ENCODE measurements at regions of chr7 and their contacts with region 1.

Region 1: GRCh38 chr7:104816537-104816936 is 197.5 kb upstream of the KMT2E start:
- DNase-seq: no peak
- H3K4me3 ChIP-seq: no peak overlapping the region
- H3K27ac ChIP-seq: no peak overlapping the region
- H3K4me1 ChIP-seq: no peaks in the 10 kb centered on the region
- H3K27me3 ChIP-seq: peaks cover 80% of the 10 kb centered on the region
- CTCF ChIP-seq: no peak

Region 2: GRCh38 chr7:103879411-103879810 is 937.1 kb before region 1 on chr7:
- CTCF ChIA-PET with region 1: interaction called, 12 read pairs
- POLR2A ChIA-PET with region 1: no interaction called
- intact Hi-C with region 1: no loop called
- DNase-seq: no peak
- H3K4me3 ChIP-seq: no peak overlapping the region
- H3K27ac ChIP-seq: no peak overlapping the region
- H3K4me1 ChIP-seq: no peaks in the 10 kb centered on the region
- H3K27me3 ChIP-seq: no peaks in the 10 kb centered on the region
- CTCF ChIP-seq: no peak

Region 3: GRCh38 chr7:104499227-104499626 is 317.3 kb before region 1 on chr7:
- CTCF ChIA-PET with region 1: no interaction called
- POLR2A ChIA-PET with region 1: no interaction called
- intact Hi-C with region 1: no loop called
- DNase-seq: no peak
- H3K4me3 ChIP-seq: no peak overlapping the region
- H3K27ac ChIP-seq: no peak overlapping the region
- H3K4me1 ChIP-seq: no peaks in the 10 kb centered on the region
- H3K27me3 ChIP-seq: no peaks in the 10 kb centered on the region; the same call in 1 of the 2 replicates
- CTCF ChIP-seq: no peak